K562 (cell line): ENCODE measurements at regions of chr18 and their contacts with region 1.

Region 1: GRCh38 chr18:3281456-3282400 is 19.8 kb downstream of the MYL12B start:
- DNase-seq: peak; percentile 64 to 85 (median 70)
- ATAC-seq: peak; percentile 81
- H3K4me3 ChIP-seq: no peak overlapping the region
- H3K27ac ChIP-seq: no peak overlapping the region
- H3K4me1 ChIP-seq: peaks cover 4 to 8% of the 10 kb centered on the region in 2 experiments; a peak in 4 of 5 replicates
- H3K27me3 ChIP-seq: no peaks in the 10 kb centered on the region
- CTCF ChIP-seq: peak; percentile 51 to 91 (median 60); a peak in 5 of 6 replicates
- EP300 ChIP-seq: no peak
- POLR2A ChIP-seq: no peak
- RAD21 ChIP-seq: peak; percentile 99

Region 2: GRCh38 chr18:3217948-3218647 is 63.6 kb before region 1 on chr18:
- CTCF ChIA-PET with region 1: no interaction called
- POLR2A ChIA-PET with region 1: no interaction called
- in situ Hi-C with region 1: no loop called
- intact Hi-C with region 1: no loop called
- DNase-seq: peak; percentile 31 to 57 (median 44)
- ATAC-seq: peak; percentile 76
- H3K4me3 ChIP-seq: no peak overlapping the region
- H3K27ac ChIP-seq: peak overlapping the region; percentile 32; the same call in 1 of the 3 replicates
- H3K4me1 ChIP-seq: peaks cover 12 to 21% of the 10 kb centered on the region in 2 experiments
- H3K27me3 ChIP-seq: no peaks in the 10 kb centered on the region
- CTCF ChIP-seq: no peak
- EP300 ChIP-seq: no peak
- POLR2A ChIP-seq: no peak
- RAD21 ChIP-seq: no peak

Region 3: DNA sequence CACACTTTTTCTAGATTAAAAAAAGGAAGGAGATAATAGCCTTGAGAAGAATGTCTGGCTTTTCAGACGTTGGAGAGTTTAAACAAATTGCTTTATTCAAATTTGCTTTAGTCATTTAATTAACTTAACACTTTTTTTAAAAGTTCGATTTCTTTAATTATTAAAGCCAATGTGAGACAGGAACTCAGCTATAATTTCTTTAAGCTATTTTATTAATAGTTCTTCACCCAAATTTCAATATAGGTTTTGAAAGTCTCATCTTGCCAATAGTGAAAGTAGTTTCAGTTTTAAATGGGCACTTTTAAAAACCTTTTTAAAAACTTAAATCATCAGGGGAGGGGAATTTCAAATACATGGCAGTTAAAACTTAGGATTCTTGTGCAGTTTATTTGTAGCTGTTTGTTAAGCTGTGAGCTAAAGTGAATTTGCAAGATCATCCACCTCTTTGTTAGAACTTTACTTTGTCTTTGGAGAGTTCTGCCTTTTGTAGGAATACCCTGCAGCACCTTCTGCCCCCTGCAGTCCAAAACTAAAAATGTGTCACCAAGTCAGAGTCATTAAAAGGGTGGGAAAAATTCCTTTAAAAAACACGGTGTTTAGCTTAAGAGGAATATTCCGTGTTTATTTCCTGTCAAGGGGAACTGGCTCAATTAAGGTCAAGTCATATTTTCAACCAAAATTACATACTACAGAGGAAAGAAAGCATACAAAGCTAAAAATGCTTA is 172.8 kb after region 1 on chr18:
- CTCF ChIA-PET with region 1: interaction called, 42 read pairs
- POLR2A ChIA-PET with region 1: interaction called, 7 read pairs
- in situ Hi-C with region 1: loop called (anchors 5 kb)
- intact Hi-C with region 1: loop called (anchors 1 kb)
- DNase-seq: peak; percentile 58 to 84 (median 68)
- ATAC-seq: peak; percentile 10
- H3K4me3 ChIP-seq: peak overlapping the region; percentile 87
- H3K27ac ChIP-seq: peak overlapping the region; percentile 86; the same call in 2 of the 3 replicates
- H3K4me1 ChIP-seq: peaks cover 2 to 25% of the 10 kb centered on the region in 2 experiments
- H3K27me3 ChIP-seq: no peaks in the 10 kb centered on the region
- CTCF ChIP-seq: peak; percentile 73 to 93 (median 77); a peak in 5 of 6 replicates
- EP300 ChIP-seq: no peak
- POLR2A ChIP-seq: no peak
- RAD21 ChIP-seq: peak; percentile 80 to 85

Region 4: DNA sequence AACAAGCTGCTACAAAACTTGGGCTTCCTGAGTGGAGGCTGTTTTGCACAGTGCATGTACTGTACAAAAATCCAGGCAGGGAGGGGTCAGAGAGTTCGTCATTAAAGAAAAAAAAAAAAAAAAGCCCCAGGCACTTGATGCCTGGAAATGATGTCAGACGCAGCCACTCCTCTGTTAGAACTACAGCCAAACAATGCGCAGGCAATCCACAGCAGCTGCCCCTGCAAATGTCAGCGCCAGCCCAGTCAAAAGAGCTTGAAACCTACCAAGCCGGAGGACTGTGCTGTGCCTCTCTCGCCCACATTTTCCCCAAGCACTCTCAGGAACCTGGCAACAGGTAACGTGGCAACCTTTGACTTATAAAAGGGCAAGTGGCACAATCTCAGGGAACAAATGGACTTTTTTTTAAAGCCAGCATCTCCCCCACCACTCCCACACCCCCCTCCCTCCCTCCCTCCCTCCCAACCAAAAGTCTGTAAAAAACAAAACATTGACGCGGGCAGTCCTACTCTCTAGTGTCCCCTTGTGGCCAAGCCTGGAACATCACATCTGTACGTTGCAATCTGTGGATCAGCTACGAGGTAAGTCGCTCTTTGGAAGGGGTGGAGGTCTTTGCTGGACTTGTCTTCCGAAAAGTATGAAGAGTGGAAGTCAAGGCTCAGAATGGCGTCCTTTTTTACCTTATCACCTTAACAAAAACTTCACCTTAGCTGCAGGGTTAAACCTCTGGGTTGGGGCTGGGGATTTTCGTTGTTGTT is 312.4 kb after region 1 on chr18:
- CTCF ChIA-PET with region 1: interaction called, 12 read pairs
- POLR2A ChIA-PET with region 1: interaction called, 4 read pairs
- in situ Hi-C with region 1: loop called (anchors 5 kb)
- intact Hi-C with region 1: no loop called
- DNase-seq: peak; percentile 82 to 97 (median 86)
- ATAC-seq: peak; percentile 61
- H3K4me3 ChIP-seq: peak overlapping the region; percentile 42
- H3K27ac ChIP-seq: peak overlapping the region; percentile 94
- H3K4me1 ChIP-seq: peaks cover 44 to 60% of the 10 kb centered on the region in 2 experiments
- H3K27me3 ChIP-seq: no peaks in the 10 kb centered on the region
- CTCF ChIP-seq: peak; percentile 87 to 94 (median 90)
- EP300 ChIP-seq: peak; percentile 70
- POLR2A ChIP-seq: no peak
- RAD21 ChIP-seq: peak; percentile 48 to 66

Region 5: DNA sequence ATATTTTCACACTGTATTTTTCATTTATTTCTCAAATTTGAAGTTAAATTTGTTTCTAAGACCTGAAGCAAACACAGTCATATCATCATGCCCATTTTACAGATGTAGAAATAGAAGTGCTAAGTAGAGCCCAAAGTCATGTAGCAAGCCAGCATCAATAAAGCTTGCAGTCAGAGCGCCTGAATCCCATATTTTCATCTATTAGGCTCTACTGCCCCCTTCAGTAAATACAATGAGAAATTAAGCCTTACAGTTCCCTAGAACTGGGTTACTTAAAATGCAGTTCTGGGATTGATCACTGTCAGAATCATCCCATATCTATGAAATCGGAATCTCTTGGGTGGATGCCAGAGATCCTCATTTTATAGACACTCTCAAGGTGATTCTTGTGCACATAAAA is 588.1 kb after region 1 on chr18:
- CTCF ChIA-PET with region 1: interaction called, 8 read pairs
- POLR2A ChIA-PET with region 1: interaction called, 3 read pairs
- in situ Hi-C with region 1: loop called (anchors 5 kb)
- intact Hi-C with region 1: loop called (anchors 2 kb)
- DNase-seq: peak in 3 of 4 experiments; percentile 14 to 61 (median 49)
- ATAC-seq: peak; percentile 93
- H3K4me3 ChIP-seq: no peak overlapping the region
- H3K27ac ChIP-seq: no peak overlapping the region
- H3K4me1 ChIP-seq: no peaks in the 10 kb centered on the region
- H3K27me3 ChIP-seq: no peaks in the 10 kb centered on the region
- CTCF ChIP-seq: peak; percentile 32 to 76 (median 57); a peak in 5 of 6 replicates
- EP300 ChIP-seq: no peak
- POLR2A ChIP-seq: no peak
- RAD21 ChIP-seq: peak; percentile 79 to 89

Region 6: GRCh38 chr18:3995476-3996102 is 713.9 kb after region 1 on chr18:
- CTCF ChIA-PET with region 1: interaction called, 10 read pairs
- POLR2A ChIA-PET with region 1: no interaction called
- in situ Hi-C with region 1: no loop called
- intact Hi-C with region 1: loop called (anchors 5 kb)
- DNase-seq: peak; percentile 38 to 84 (median 48)
- ATAC-seq: peak; percentile 84
- H3K4me3 ChIP-seq: no peak overlapping the region
- H3K27ac ChIP-seq: no peak overlapping the region
- H3K4me1 ChIP-seq: no peaks in the 10 kb centered on the region
- H3K27me3 ChIP-seq: peaks cover 0 to 5% of the 10 kb centered on the region in 2 experiments; a peak in 1 of 5 replicates
- CTCF ChIP-seq: peak; percentile 76 to 90 (median 80)
- EP300 ChIP-seq: no peak
- POLR2A ChIP-seq: no peak
- RAD21 ChIP-seq: peak; percentile 52 to 66; a peak in 3 of 4 replicates